Endothelial cell of umbilical vein (primary cell): ENCODE measurements at regions of chrX and their contacts with region 1.

Region 1: DNA sequence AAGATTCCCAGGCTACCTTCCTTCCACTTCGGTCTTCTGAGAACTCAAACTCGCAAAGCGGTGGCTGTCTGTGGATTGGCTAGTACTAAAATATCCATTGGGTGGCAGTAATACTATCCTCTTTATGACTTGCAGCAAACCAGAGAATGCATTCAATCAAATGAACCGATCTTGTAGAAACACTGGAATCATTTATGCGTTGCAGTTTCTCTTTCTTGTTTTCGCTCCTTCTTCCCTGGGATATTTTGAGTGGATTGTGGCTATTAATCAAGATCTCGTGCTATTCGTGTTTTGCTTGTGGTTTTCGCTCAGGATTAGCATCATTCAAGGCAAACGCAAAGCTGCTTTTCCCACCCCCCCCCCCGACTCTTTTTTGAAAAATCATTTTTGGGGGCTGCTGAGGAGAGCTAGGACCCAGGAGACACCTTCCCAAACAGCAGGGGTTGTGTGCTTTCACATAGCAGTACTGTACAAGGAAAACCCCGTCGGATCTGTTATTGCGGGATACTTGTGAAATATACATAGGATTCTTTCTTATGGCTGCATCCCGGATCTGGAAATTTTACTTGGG is at the start of gene IL1RAPL1:
- DNase-seq: peak; percentile 78
- H3K4me3 ChIP-seq: peak within 1 kb of the TSS; percentile 50 to 88 (median 59)
- H3K27ac ChIP-seq: peak within 1 kb of the TSS; percentile 26
- H3K4me1 ChIP-seq: peaks cover 32% of the 10 kb centered on the region
- H3K27me3 ChIP-seq: no peaks in the 10 kb centered on the region
- CTCF ChIP-seq: no peak
- POLR2A ChIP-seq: no peak
- total RNA-seq, gene IL1RAPL1: 1.3 and 1.6 TPM in 2 replicates

Region 2: DNA sequence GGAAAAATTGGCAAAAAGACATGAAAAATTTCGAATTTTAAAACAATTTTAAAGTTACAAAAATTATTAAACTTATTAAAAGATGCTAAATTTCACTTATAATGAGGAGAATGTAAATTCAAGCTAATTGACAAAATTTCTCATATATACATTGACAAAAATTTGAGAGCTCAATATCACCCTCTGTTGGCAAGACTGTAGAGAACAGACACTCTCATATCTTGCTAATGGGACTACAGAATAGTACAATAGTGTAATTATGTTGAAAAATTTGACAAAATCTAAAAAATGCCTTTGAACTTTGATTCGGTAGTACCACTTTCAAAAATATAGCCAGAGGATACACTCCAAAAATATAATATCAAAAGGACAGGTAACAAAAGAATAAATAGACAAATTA is 967.1 kb before region 1 on chrX:
- CTCF ChIA-PET with region 1: interaction called, 4 read pairs
- POLR2A ChIA-PET with region 1: no interaction called
- dilution Hi-C with region 1: no loop called
- intact Hi-C with region 1: loop called (anchors 5 kb)
- DNase-seq: peak; percentile 53
- H3K4me3 ChIP-seq: no peak overlapping the region
- H3K27ac ChIP-seq: peak overlapping the region; percentile 65
- H3K4me1 ChIP-seq: peaks cover 15% of the 10 kb centered on the region
- H3K27me3 ChIP-seq: no peaks in the 10 kb centered on the region
- CTCF ChIP-seq: peak; percentile 13 to 18
- POLR2A ChIP-seq: no peak

Region 3: DNA sequence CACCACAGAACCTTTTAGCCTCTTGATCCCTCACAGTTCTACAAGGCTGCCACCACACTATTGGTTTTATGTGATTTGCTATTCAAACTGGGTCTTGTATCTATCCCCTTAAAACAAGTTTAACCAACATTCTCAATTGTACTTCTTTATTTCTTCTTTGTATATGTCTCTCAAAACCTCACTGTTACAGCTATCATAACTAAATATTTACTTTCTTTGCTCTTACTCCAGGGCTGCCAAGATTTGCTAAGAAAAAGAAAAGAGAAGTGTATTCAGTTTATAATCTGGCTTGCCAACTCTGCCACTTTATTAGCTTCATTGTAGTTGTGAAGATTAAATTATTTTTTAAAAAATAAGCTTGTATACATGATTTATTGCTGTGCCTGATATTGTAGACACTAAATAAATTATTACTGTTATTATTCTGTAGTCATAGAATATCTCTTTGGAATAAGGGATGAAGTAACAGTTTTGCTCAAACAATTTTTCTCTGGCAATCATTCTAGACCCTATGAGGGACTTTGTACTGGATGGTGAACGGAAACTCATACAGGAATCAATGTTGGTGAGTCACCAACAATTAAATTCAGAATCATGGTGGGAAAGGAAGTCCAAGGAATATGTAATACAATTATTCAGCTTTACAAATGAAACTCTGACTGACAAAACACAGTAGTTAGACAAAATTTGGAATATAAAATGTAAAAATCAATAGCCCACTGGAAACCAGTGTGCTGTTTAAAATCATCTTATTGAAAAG is 478.7 kb before region 1 on chrX:
- CTCF ChIA-PET with region 1: no interaction called
- POLR2A ChIA-PET with region 1: no interaction called
- dilution Hi-C with region 1: no loop called
- intact Hi-C with region 1: loop called (anchors 10 kb)
- DNase-seq: peak; percentile 79
- H3K4me3 ChIP-seq: no peak overlapping the region
- H3K27ac ChIP-seq: peak overlapping the region; percentile 34
- H3K4me1 ChIP-seq: peaks cover 21% of the 10 kb centered on the region
- H3K27me3 ChIP-seq: no peaks in the 10 kb centered on the region
- CTCF ChIP-seq: no peak
- POLR2A ChIP-seq: no peak

Region 4: GRCh38 chrX:28498658-28499057 is 88.4 kb before region 1 on chrX:
- CTCF ChIA-PET with region 1: no interaction called
- POLR2A ChIA-PET with region 1: no interaction called
- dilution Hi-C with region 1: no loop called
- intact Hi-C with region 1: loop called (anchors 1 kb)
- DNase-seq: peak; percentile 76
- H3K4me3 ChIP-seq: peak overlapping the region in 1 of 3 experiments; percentile 45
- H3K27ac ChIP-seq: peak overlapping the region; percentile 79
- H3K4me1 ChIP-seq: peaks cover 21% of the 10 kb centered on the region
- H3K27me3 ChIP-seq: no peaks in the 10 kb centered on the region
- CTCF ChIP-seq: no peak
- POLR2A ChIP-seq: no peak

Region 5: DNA sequence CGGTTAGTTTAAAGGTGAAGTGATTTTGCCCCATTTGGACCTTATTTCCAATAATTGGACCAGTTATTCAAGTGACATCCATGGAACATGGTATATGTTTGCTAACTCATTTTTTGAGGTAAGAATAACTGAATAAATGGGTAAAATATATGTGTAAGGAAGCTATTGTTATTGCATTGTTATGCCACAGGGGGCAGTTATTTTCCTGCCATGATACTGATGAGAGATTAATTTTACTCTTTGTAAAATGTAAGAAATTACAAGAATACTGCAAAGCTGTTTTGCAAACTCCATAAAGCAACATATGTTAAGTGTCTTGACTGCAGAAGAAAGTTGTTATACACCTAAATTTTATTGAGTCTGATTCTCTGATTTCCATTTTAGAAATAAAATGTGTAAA is 114.2 kb after region 1 on chrX:
- CTCF ChIA-PET with region 1: no interaction called
- POLR2A ChIA-PET with region 1: no interaction called
- dilution Hi-C with region 1: no loop called
- intact Hi-C with region 1: no loop called
- DNase-seq: no peak
- H3K4me3 ChIP-seq: no peak overlapping the region
- H3K27ac ChIP-seq: no peak overlapping the region
- H3K4me1 ChIP-seq: no peaks in the 10 kb centered on the region
- H3K27me3 ChIP-seq: no peaks in the 10 kb centered on the region
- CTCF ChIP-seq: no peak
- POLR2A ChIP-seq: no peak

Region 6: GRCh38 chrX:29044423-29045184 is 457.5 kb after region 1 on chrX:
- CTCF ChIA-PET with region 1: no interaction called
- POLR2A ChIA-PET with region 1: no interaction called
- dilution Hi-C with region 1: no loop called
- intact Hi-C with region 1: loop called (anchors 2 kb)
- DNase-seq: peak; percentile 29
- H3K4me3 ChIP-seq: no peak overlapping the region
- H3K27ac ChIP-seq: no peak overlapping the region
- H3K4me1 ChIP-seq: no peaks in the 10 kb centered on the region
- H3K27me3 ChIP-seq: no peaks in the 10 kb centered on the region
- CTCF ChIP-seq: peak; percentile 5 to 12
- POLR2A ChIP-seq: no peak

Region 7: GRCh38 chrX:29231800-29232199 is 644.7 kb after region 1 on chrX:
- CTCF ChIA-PET with region 1: no interaction called
- POLR2A ChIA-PET with region 1: no interaction called
- dilution Hi-C with region 1: no loop called
- intact Hi-C with region 1: loop called (anchors 5 kb)
- DNase-seq: peak; percentile 9
- H3K4me3 ChIP-seq: no peak overlapping the region
- H3K27ac ChIP-seq: no peak overlapping the region
- H3K4me1 ChIP-seq: no peaks in the 10 kb centered on the region
- H3K27me3 ChIP-seq: no peaks in the 10 kb centered on the region
- CTCF ChIP-seq: peak in 1 of 2 donors; percentile 4
- POLR2A ChIP-seq: no peak

Region 8: DNA sequence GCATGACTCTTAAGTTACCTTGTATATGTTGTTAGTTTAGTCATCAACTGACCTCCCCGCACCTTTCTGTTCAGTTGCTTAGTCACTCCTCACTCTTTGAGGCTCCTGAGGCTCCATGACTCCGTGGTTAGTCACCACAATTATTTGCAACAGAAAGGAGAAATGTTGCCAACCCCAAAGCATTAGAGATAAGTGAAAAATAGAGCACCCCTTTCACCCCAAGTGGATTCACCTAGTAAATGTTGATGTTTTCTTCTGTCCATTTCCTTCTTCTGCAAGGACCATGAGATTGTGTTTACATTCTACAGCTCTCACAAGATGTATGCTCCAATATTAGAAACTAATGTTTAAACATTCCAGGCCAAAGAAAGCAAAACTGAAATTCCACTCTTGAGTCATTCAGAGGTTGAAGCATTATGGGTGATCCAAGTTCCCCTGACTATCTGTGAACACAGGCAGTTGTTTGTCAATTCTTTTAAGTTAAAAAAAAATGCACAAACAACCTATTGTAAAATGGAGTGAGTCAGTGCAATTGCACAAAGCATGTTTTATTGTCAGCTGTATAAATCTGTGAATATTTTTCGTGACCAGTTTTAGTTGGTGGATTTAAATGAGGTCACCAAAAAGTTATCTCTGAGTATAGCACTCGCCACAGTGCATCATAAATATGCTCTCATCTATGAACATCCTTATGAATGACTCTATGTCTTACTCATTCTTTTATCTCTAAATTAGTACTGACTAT is 1075.9 kb after region 1 on chrX:
- CTCF ChIA-PET with region 1: no interaction called
- POLR2A ChIA-PET with region 1: no interaction called
- dilution Hi-C with region 1: no loop called
- intact Hi-C with region 1: loop called (anchors 2 kb)
- DNase-seq: peak; percentile 92
- H3K4me3 ChIP-seq: no peak overlapping the region
- H3K27ac ChIP-seq: peak overlapping the region; percentile 79
- H3K4me1 ChIP-seq: peaks cover 23% of the 10 kb centered on the region
- H3K27me3 ChIP-seq: no peaks in the 10 kb centered on the region
- CTCF ChIP-seq: no peak
- POLR2A ChIP-seq: no peak